ENCODE measurements at regions of chr1 and their contacts with region 1.

Region 1: DNA sequence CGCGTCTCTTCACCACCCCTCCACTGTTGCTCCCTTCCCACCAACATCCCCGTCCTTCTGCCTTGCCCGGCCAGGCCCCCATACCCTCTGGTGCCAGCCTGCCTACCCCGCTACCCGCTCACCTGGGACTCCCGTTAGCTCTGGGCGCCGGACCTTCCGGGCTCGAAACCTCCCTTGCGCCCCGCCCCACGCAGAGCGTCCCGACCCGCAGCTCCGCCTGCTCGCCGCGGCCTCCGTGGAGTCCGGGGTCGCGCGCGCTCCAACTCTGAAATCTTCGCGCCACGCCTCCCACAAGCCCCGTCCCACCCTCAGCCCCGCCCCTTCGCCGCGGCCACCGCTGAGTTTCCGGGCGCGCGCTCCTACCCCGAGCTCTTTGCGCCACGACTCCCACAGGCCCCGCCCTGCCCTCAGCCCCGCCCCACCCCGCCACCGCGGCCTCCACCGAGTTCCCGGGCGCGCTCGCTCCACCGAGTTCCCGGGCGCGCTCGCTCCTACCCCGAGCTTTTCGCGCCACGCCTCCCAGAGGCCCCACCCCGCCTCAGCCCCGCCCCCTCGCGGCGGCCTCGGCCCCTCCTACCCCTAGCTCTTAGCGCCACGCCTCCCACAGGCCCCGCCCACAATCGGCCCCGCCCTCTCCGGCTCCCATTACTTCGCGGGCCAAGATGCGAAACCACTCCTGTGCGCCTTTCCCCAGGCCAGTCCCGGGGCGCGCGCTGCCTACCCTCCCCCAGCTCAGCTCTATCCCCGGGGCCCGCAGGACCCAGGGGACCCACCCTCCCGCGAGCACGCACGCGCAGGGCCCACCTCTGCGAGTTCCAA is at the start of gene IFT25:
- DNase-seq: peak; percentile 99
- ATAC-seq: peak; percentile 86
- H3K4me3 Mint-ChIP-seq: peak within 1 kb of the TSS; percentile 93
- H3K27ac Mint-ChIP-seq: peak within 1 kb of the TSS; percentile 88
- H3K4me1 Mint-ChIP-seq: peaks cover 53% of the 10 kb centered on the region
- H3K27me3 Mint-ChIP-seq: no peaks in the 10 kb centered on the region
- CTCF ChIP-seq: no peak
- total RNA-seq, gene IFT25: 60.5 to 63.5 TPM

Region 2: GRCh38 chr1:53837924-53838652 is 107.6 kb before region 1 on chr1 and contains the start of gene NDC1:
- CTCF ChIA-PET with region 1: interaction called, 3 read pairs
- POLR2A ChIA-PET with region 1: interaction called, 16 read pairs
- intact Hi-C with region 1: no loop called
- DNase-seq: peak; percentile 93
- ATAC-seq: peak; percentile 92
- H3K4me3 Mint-ChIP-seq: peak within 1 kb of the TSS; percentile 99
- H3K27ac Mint-ChIP-seq: peak within 1 kb of the TSS; percentile 93
- H3K4me1 Mint-ChIP-seq: peaks cover 26% of the 10 kb centered on the region
- H3K27me3 Mint-ChIP-seq: peaks cover 2% of the 10 kb centered on the region
- CTCF ChIP-seq: no peak
- total RNA-seq, gene NDC1: 39.6 to 43.9 TPM

Region 3: DNA sequence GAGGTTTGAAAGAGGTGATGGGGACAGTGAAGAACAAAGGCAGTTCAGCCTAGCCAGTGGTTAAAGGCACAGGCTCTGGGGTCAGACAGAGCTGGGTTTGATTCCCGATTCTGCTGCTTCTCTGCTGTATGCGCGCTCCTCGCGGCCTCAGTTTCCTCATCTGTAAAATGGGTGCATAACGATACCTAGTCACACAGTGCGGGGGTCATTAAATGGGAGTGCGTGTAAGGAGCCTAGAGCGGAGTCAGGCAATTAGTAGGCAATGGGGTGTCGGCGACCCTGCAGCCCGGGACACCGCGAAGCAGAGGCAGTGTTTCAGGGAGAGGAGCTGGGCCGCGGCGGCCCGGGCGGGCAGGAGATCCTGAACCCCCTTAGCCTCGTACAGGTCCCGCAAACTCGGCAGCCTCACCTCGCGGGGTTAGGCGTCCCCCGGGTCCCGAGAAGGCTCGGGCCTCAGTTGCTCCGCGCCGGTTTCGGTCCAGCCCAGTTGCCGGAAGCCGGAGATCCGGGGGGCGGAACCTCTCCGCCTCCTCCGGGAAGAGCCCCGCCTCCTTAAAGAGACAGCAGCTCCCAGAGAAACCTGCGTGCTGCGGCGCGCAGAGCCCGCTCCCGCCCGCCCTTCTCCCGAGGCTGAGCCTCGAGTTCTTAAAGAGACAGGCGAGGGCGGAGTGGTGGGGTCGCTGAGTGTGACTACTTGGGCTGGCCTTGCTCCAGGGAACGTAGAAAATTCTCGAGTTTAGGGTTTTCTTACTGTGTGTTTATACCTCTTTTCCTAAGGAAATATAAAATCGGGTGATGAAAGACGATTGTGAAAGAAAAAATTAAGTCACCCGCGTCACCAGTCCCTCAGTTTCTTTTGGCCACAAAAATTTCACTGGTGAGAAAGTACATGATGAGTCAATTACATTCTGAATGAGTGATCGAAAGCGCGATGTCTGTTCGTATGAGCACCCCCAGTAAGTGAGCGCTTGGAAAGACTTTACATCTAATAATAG is 56.0 kb before region 1 on chr1 and contains the start of gene YIPF1:
- CTCF ChIA-PET with region 1: interaction called, 78 read pairs
- POLR2A ChIA-PET with region 1: interaction called, 11 read pairs
- intact Hi-C with region 1: loop called (anchors 5 kb)
- DNase-seq: peak; percentile 89
- ATAC-seq: peak; percentile 92
- H3K4me3 Mint-ChIP-seq: peak within 1 kb of the TSS; percentile 96
- H3K27ac Mint-ChIP-seq: peak within 1 kb of the TSS; percentile 99
- H3K4me1 Mint-ChIP-seq: peaks cover 36% of the 10 kb centered on the region
- H3K27me3 Mint-ChIP-seq: no peaks in the 10 kb centered on the region
- CTCF ChIP-seq: no peak
- total RNA-seq, gene YIPF1: 13.2 to 15.6 TPM

Region 4: DNA sequence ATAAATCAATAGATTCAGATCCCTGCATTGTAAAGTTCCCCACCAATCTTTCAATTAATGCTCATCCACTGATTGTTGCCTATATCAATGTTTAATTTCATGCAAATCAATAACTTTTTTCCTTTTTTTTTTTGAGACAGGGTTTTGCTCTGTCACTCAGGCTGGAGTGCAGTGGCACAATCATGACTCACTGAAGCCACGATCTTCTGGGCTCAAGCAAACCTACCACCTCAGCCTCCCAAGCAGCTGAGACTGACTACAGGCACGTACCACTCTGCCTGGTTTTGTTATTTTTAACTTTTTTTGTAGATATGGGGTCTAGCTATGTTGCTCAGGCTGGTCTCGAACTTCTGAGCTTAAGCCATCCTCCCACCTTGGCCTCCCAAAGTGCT is 26.0 kb before region 1 on chr1:
- CTCF ChIA-PET with region 1: interaction called, 11 read pairs
- POLR2A ChIA-PET with region 1: interaction called, 9 read pairs
- intact Hi-C with region 1: no loop called
- DNase-seq: peak; percentile 68
- ATAC-seq: peak; percentile 89
- H3K4me3 Mint-ChIP-seq: no peak overlapping the region
- H3K27ac Mint-ChIP-seq: peak overlapping the region; percentile 90
- H3K4me1 Mint-ChIP-seq: peaks cover 36% of the 10 kb centered on the region
- H3K27me3 Mint-ChIP-seq: no peaks in the 10 kb centered on the region
- CTCF ChIP-seq: no peak

Region 5: GRCh38 chr1:53979712-53980450 is 34.2 kb after region 1 on chr1:
- CTCF ChIA-PET with region 1: no interaction called
- POLR2A ChIA-PET with region 1: no interaction called
- intact Hi-C with region 1: no loop called
- DNase-seq: no peak
- ATAC-seq: no peak
- H3K4me3 Mint-ChIP-seq: no peak overlapping the region
- H3K27ac Mint-ChIP-seq: no peak overlapping the region
- H3K4me1 Mint-ChIP-seq: no peaks in the 10 kb centered on the region
- H3K27me3 Mint-ChIP-seq: peaks cover 3% of the 10 kb centered on the region
- CTCF ChIP-seq: no peak

Measured in activated CD8-positive, alpha-beta T cell treated with anti-CD3 and anti-CD28 coated beads for 36 hours (primary cell).